Activated CD4-positive, alpha-beta memory T cell treated with anti-CD3 and anti-CD28 coated beads for 36 hours (primary cell): ENCODE measurements at regions of chr5 and their contacts with region 1.

Region 1: GRCh38 chr5:99032234-99033013 is 103.6 kb upstream of the CHD1 start:
- DNase-seq: peak; percentile 55
- H3K4me3 Mint-ChIP-seq: peak overlapping the region; percentile 73
- H3K27ac Mint-ChIP-seq: peak overlapping the region; percentile 71
- H3K4me1 Mint-ChIP-seq: peaks cover 77% of the 10 kb centered on the region
- H3K27me3 Mint-ChIP-seq: no peaks in the 10 kb centered on the region

Region 2: DNA sequence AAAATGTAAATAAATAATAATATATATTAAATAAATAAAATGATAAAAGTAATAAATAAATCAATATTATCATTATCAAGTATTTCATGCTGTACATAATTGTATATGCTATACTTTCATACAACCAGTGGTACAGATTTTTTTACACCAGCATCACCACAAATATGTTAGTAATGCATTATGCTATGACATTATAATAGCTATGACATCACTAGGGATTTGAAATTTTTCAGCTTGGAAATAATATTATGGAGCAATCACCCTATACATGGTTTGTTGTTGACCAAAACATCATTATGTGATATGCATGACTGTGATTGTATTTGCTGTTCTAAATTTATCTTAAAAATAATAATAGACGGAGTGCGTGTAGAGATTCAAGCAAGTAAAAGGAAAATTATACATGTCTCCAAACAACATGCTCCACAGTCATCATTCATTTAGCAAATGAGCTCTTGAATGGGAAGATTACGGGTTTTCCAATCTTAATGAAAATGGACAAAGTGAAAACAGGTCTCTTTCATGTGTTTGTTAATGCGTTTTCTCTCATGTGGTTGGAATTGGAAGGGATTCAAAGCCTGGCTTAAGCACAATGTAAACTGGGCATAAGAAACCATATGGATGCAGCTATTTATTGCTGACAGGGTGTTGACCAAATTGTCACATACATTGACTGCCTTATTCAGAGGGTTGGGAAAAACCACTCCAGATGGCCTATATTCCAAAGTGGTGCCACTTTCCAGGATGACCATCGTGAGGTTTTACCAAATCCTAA is 902.0 kb before region 1 on chr5:
- CTCF ChIA-PET with region 1: no interaction called
- POLR2A ChIA-PET with region 1: no interaction called
- intact Hi-C with region 1: no loop called
- DNase-seq: no peak
- H3K4me3 Mint-ChIP-seq: no peak overlapping the region
- H3K27ac Mint-ChIP-seq: no peak overlapping the region
- H3K4me1 Mint-ChIP-seq: no peaks in the 10 kb centered on the region
- H3K27me3 Mint-ChIP-seq: no peaks in the 10 kb centered on the region

Region 3: DNA sequence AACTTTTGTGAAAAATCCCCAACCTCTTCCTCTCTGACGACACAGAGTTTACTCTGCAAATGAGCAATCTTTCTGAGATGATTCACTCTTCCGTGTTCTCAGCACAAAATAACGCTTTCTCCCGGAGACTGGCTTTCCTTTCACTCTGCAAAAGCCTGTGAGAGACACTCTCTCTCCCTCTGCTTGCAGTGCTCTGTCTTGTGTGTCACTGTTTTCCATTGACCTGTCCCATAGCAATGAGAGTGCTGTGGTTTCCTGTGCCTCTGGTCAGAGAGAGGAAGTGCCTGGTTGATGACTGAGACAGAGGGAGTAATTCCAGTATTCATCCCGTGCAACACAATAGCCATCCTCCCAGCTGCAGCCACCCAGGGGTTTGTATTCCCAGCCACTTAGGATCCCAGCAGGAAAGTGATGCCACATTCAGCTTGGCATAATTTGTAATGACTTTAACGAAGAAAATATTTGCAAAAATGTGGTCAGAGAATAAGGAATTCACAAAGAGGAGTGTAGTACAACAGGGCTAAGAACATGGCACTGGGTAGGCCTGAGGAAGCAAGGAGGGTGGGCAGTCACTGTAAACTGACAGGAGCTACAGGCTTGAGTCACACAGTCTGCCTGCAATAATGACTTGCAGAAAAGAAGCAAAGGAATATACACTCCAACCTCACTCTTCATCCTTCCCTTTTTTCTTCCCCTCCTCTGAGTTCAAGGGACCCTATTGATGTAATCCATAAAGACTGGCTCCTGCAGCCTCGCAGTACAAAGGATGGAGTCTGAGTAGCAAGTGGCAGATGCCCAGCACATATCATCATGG is 722.4 kb before region 1 on chr5:
- CTCF ChIA-PET with region 1: no interaction called
- POLR2A ChIA-PET with region 1: no interaction called
- intact Hi-C with region 1: loop called (anchors 1 kb)
- DNase-seq: peak; percentile 37
- H3K4me3 Mint-ChIP-seq: no peak overlapping the region
- H3K27ac Mint-ChIP-seq: no peak overlapping the region
- H3K4me1 Mint-ChIP-seq: peaks cover 8% of the 10 kb centered on the region
- H3K27me3 Mint-ChIP-seq: no peaks in the 10 kb centered on the region

Region 4: DNA sequence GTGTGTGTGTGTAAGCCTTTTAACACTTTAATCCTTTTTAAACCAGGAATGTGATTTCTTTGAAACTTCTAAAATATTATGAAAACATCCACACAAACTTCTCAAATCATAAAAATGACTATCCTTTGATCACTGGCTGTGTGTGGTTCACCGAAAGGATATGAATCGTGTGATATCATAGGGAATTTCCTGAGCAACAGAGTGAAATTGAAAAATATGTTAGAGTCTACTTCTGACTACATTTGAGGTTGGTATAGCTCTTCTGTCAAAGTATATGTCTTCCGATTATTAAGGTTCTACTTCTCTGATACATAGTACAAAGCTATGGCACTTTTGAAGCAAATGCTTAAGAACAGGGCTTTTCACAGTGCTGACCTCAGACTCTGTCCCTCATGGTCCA is 218.7 kb before region 1 on chr5:
- CTCF ChIA-PET with region 1: no interaction called
- POLR2A ChIA-PET with region 1: no interaction called
- intact Hi-C with region 1: loop called (anchors 1 kb)
- DNase-seq: no peak
- H3K4me3 Mint-ChIP-seq: no peak overlapping the region
- H3K27ac Mint-ChIP-seq: no peak overlapping the region
- H3K4me1 Mint-ChIP-seq: peaks cover 6% of the 10 kb centered on the region
- H3K27me3 Mint-ChIP-seq: no peaks in the 10 kb centered on the region

Region 5: DNA sequence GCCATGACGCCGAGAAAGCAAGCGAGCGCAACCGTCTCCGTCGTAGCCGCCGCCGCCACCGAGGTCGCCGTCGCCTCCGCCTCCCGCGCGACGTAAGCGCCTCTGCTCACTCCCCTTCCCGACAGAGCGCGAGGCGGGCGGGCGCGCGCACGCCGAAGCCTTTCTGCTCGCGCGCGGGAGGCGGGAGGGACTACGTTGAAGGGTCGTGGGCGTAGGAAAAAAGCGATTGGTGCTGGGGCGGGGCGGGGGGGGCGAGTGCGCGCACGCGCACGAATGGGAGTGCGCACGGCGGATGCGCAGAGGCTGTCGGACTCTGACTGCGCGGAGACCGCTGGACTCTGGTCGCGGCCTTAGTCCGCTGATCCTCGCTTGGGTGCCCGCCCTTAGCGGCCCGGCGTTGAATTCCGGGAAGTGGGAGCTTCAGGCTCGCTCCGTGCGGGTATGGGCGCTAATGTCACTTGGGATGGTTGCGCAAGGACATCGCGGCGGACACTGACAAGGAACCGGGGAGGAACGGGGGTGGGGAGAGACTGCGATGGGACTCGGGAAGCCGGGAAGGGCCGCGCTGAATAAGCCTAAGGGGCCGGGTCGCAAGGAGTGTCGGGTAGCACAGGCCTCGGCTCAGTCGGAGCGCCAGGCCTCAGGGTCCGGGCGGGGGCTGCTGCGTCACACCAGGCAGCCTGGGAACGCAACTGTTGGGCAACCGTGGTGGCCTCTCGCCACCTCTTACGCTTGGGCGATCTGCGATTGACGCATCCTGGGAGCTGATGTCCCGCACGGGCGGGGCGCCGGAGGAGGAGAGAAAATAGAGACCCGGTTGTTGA is 103.3 kb before region 1 on chr5 and contains the start of gene CHD1:
- CTCF ChIA-PET with region 1: no interaction called
- POLR2A ChIA-PET with region 1: interaction called, 4 read pairs
- intact Hi-C with region 1: loop called (anchors 1 kb)
- DNase-seq: peak; percentile 97
- H3K4me3 Mint-ChIP-seq: peak within 1 kb of the TSS; percentile 99
- H3K27ac Mint-ChIP-seq: peak within 1 kb of the TSS; percentile 100
- H3K4me1 Mint-ChIP-seq: peaks cover 55% of the 10 kb centered on the region
- H3K27me3 Mint-ChIP-seq: no peaks in the 10 kb centered on the region
- total RNA-seq, gene CHD1: 50.1 to 53.4 TPM

Region 6: DNA sequence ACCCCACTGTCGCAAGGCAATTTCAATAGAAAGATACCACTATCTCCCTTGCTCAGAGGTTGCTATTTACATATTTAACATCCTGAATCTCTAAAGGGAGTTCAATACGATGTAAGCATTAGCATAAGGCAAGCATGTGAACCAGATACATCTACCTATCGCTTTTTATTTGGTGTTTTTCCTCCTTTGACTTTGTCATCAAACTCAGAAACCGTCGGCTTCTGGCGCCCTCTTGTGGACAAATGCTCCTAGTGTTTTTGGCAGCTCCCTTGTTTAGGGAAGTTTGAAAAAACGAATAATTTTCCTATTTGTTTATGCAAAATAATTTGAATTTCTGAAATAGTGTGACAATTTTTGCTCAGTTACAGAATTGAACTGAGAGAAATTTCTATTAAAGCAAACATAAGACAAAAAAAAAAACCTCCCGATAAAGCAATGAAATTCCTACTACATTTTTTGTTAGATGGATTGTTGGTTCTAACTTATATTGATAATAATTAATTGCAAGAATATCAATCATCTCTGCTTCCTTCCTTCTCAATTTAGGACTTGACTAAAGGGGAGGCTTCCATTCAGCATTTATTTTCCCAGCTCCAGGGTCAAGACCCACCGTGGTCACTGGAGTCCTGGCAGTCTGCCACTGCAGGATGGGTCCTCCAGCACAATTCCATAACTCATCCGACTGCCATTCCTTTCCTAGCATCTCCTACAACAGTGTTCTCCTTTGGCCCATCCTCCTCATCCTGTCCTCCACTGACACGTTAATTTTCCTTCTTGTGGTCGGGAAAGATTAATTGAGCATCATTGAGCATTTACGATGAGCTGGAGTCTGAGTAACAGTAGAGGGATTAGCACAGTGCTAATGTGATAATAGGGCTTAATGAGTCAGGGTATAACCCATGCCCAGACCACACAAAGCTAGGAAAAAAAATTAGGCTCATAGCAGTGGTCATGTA is 28.2 kb after region 1 on chr5:
- CTCF ChIA-PET with region 1: interaction called, 8 read pairs
- POLR2A ChIA-PET with region 1: no interaction called
- intact Hi-C with region 1: loop called (anchors 1 kb)
- DNase-seq: peak; percentile 88
- H3K4me3 Mint-ChIP-seq: no peak overlapping the region
- H3K27ac Mint-ChIP-seq: no peak overlapping the region
- H3K4me1 Mint-ChIP-seq: peaks cover 6% of the 10 kb centered on the region
- H3K27me3 Mint-ChIP-seq: peaks cover 1% of the 10 kb centered on the region